Posterior vena cava (tissue), 2 donors: ENCODE measurements at regions of chr6 and their contacts with region 1.

Region 1: DNA sequence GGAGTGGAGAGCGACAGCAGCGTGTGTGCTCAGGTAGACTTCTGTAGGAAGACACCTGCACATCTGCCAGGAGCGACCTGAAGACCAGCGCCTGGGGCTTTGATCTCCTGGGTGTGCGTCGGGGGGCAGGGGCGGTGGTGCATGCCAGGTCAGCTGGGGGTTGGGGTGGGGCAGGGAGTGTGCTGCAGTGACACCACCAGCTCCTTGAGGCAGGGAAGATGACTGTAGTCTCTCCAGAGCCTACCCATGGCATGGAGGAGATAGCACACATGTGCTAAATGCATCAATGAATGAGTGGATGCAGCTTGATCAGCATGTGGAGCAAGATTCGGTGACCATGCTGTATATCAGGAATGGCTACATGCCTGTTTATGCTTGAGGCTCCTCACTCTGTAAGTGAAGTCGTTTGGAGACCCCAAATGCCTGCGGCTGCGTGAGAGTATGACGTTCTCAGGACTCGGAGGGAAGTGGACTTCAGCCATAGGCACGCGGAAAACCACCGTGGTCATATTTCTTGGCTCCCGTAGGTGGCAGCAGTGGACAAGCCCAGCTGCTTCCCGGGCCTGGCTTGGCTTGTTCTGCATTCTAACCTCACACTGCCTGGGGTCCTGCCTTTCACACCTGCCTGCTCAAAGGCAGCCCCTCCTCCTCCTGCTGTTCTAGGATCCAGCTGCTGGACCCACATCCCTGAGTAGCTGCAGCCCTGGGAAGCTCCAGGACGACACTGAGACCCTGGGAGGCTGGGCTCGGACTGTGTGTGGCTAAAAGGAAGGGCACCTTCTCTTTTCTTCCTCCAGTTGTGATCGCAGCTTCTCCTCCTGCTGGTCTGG is 39.4 kb upstream of the KCNK16 start:
- DNase-seq: peak; percentile 88

Region 2: GRCh38 chr6:38773338-38773737 is 588.5 kb before region 1 on chr6:
- intact Hi-C with region 1: no loop called
- DNase-seq: no peak

Region 3: DNA sequence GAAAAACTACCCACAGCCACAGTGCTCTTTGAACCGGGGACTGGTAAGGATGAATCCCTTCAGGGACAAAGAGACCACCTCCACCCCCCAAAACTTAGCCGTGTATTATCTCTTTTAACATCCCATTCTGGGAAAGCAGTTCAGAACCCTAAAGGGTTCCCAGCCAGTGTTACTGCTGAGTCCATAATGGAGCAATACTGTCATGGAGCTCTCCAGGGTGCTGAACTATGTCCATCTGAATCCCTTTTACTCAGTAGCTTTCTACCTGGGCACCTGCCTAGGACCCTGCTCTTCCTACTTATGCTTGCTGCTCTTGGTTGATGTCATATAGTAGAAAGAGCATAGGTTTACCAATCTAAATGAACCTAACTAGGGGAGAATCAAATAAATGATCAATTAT is 224.6 kb before region 1 on chr6:
- intact Hi-C with region 1: no loop called
- DNase-seq: no peak

Region 4: GRCh38 chr6:40054602-40055001 is 692.7 kb after region 1 on chr6:
- intact Hi-C with region 1: no loop called
- DNase-seq: no peak

Region 5: DNA sequence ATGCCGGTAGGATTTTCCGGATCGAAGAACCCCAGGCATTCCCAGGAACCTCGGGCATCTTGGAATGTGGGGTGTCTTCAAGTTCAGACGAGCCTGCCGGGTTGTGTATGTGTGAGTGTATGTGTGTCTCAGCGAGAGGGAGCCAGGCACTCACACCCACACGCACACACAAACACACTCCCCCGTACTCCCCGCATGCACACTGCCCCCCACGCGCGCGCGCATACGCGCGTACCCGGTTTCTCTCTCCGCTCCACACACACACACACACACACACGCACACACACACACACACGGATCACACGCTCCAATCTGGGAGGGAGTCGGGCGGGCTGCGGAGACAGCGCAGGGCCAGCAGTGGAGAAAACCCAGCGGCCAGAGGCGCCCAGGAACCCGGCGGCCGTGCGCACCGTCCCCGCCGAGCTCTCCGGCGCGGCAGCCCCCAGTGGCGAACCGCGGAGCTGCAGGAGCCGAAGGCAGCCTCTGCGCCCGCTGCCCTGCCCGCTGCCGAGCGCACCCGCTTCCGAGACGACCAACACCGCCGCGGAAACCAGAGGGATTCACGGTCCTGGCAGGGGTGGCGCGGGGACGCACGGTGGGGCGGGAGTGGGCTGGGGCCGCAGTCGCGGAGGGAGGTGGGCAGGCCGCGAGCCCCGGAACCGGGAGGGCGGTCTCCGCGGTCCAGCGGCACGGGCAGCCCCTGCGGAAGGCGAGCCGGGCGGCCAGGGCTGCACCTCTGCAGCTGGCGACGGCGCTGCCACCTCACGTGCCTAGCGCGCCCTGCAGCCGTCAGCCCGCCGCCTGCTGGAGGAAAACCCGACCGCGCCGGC is 1225.6 kb after region 1 on chr6 and contains the start of gene LRFN2:
- intact Hi-C with region 1: loop called in 1 of 2 experiments (anchors 10 kb)
- DNase-seq: peak; percentile 88
- total RNA-seq, gene LRFN2: not detected